CD8-positive, alpha-beta T cell (primary cell): ENCODE measurements at regions of chr14 and their contacts with region 1.

Region 1: GRCh38 chr14:69398053-69398817 is at the starts of genes ERH and SLC39A9:
- DNase-seq: peak; percentile 87 to 98 (median 94)
- ATAC-seq: peak; percentile 79
- H3K4me3 ChIP-seq: peak within 1 kb of the TSS; percentile 69 to 78
- H3K4me3 Mint-ChIP-seq: peak within 1 kb of the TSS; percentile 99
- H3K27ac ChIP-seq: peak within 1 kb of the TSS; percentile 86 to 92
- H3K27ac Mint-ChIP-seq: peak within 1 kb of the TSS; percentile 100
- H3K4me1 ChIP-seq: peaks cover 58% of the 10 kb centered on the region
- H3K4me1 Mint-ChIP-seq: peaks cover 78% of the 10 kb centered on the region
- H3K27me3 ChIP-seq: no peaks in the 10 kb centered on the region
- H3K27me3 Mint-ChIP-seq: no peaks in the 10 kb centered on the region
- CTCF ChIP-seq: no peak
- total RNA-seq, gene ERH: 95.6 to 97.2 TPM
- total RNA-seq, gene SLC39A9: 15.8 to 18.5 TPM

Region 2: GRCh38 chr14:67674481-67675169 is 1723.6 kb before region 1 on chr14 and contains the start of gene VTI1B:
- CTCF ChIA-PET with region 1: no interaction called
- POLR2A ChIA-PET with region 1: no interaction called
- intact Hi-C with region 1: loop called in 1 of 2 experiments (anchors 10 kb)
- DNase-seq: peak; percentile 64 to 89 (median 79)
- ATAC-seq: peak; percentile 92
- H3K4me3 ChIP-seq: peak within 1 kb of the TSS; percentile 78 to 82
- H3K4me3 Mint-ChIP-seq: peak within 1 kb of the TSS; percentile 94
- H3K27ac ChIP-seq: peak within 1 kb of the TSS; percentile 93 to 95
- H3K27ac Mint-ChIP-seq: peak within 1 kb of the TSS; percentile 93
- H3K4me1 ChIP-seq: peaks cover 32% of the 10 kb centered on the region
- H3K4me1 Mint-ChIP-seq: peaks cover 39% of the 10 kb centered on the region
- H3K27me3 ChIP-seq: no peaks in the 10 kb centered on the region
- H3K27me3 Mint-ChIP-seq: no peaks in the 10 kb centered on the region
- CTCF ChIP-seq: no peak
- total RNA-seq, gene VTI1B: 27.6 to 31.1 TPM

Region 3: DNA sequence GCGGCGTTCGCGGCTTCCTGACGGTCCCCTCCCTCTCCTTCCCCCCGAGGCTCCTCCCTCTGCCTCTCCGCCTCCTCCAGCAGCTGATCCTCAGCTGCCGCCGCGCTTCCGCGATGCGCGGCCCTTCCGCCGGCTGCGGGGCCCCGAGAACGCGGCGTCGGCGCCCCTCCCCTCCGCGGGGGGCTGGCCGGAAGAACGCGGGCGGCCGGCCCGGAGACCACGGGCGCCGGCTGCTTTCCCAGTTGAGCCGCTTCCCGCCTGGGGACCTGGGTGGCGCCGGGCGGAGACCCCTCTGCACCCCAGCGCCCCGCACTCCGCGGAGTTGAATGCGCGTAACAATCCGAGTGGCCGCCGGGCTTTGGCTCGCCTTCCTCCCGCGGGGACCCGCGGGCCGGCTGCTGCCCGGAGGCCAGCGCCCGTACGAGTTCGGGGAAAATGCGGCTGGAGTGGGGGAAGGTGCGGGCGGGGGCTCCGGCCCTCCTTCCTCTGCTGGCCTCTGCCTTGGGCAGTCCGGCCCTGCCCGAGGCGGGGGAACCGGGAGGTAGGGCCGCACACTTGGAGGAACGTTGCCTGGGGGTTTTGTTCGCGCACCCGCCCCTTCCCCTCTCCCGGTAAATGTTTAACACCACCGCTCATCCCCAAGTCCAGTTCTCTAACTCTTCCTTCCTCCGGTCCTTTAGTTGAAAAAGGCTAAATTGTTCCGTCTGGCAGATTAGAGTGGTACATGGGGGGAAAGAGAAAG is 244.9 kb before region 1 on chr14:
- CTCF ChIA-PET with region 1: no interaction called
- POLR2A ChIA-PET with region 1: interaction called, 4 read pairs
- intact Hi-C with region 1: loop called (anchors 1 to 2 kb)
- DNase-seq: peak; percentile 87 to 98 (median 93)
- ATAC-seq: peak; percentile 91
- H3K4me3 ChIP-seq: peak overlapping the region; percentile 93 to 95
- H3K4me3 Mint-ChIP-seq: peak overlapping the region; percentile 89
- H3K27ac ChIP-seq: peak overlapping the region; percentile 51 to 69
- H3K27ac Mint-ChIP-seq: peak overlapping the region; percentile 95
- H3K4me1 ChIP-seq: peaks cover 36% of the 10 kb centered on the region
- H3K4me1 Mint-ChIP-seq: peaks cover 33% of the 10 kb centered on the region
- H3K27me3 ChIP-seq: no peaks in the 10 kb centered on the region
- H3K27me3 Mint-ChIP-seq: no peaks in the 10 kb centered on the region
- CTCF ChIP-seq: no peak

Region 4: GRCh38 chr14:69611201-69612011 is 213.2 kb after region 1 on chr14 and contains the start of gene SUSD6:
- CTCF ChIA-PET with region 1: no interaction called
- POLR2A ChIA-PET with region 1: interaction called, 4 read pairs
- intact Hi-C with region 1: loop called in 1 of 2 experiments (anchors 5 kb)
- DNase-seq: peak; percentile 79 to 94 (median 87)
- ATAC-seq: peak; percentile 84
- H3K4me3 ChIP-seq: peak within 1 kb of the TSS; percentile 57 to 67
- H3K4me3 Mint-ChIP-seq: peak within 1 kb of the TSS; percentile 89
- H3K27ac ChIP-seq: peak within 1 kb of the TSS; percentile 62 to 90
- H3K27ac Mint-ChIP-seq: peak within 1 kb of the TSS; percentile 100
- H3K4me1 ChIP-seq: peaks cover 54% of the 10 kb centered on the region
- H3K4me1 Mint-ChIP-seq: peaks cover 54% of the 10 kb centered on the region
- H3K27me3 ChIP-seq: no peaks in the 10 kb centered on the region
- H3K27me3 Mint-ChIP-seq: no peaks in the 10 kb centered on the region
- CTCF ChIP-seq: no peak
- total RNA-seq, gene SUSD6: 86.4 to 92.2 TPM

Region 5: DNA sequence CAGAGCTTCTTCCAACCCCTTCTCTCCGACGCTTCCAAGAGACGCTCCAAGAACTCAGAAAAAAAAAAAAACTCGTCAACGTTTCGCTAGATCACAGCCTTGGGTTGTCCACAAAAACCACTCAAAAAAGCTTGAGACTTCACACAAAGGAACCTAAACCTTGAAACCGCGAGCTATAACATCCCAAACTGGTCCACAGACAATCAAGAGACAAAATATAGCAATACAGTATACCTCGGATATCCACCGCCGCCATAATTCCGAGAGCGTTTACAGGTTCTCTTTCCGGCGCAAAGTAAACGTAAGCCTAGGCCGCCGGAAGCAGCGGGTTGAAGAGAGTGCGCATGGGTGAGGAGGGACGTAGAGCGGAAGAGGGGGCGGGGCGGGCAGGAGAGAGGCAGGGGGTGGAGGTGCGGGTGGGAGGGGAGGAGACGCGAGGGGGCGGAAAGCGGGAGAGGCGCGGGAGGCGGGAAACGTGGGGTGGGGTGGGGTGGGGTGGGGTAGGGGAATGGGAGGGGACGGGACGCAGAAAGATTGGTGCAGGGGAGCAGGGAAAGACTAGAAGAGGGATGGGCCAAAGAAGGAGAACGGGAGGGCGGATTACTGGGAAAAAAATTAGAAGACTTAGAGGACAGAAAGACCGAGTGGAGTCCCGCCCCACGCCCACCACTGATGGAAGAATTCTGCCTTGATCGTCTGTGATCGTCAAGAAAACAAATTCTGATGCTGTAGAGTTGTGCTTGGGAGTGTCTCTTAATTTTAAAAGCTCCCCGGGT is 1202.3 kb after region 1 on chr14 and contains the start of gene MED6:
- CTCF ChIA-PET with region 1: no interaction called
- POLR2A ChIA-PET with region 1: no interaction called
- intact Hi-C with region 1: loop called in 1 of 2 experiments (anchors 2 kb)
- DNase-seq: peak; percentile 83 to 96 (median 94)
- ATAC-seq: peak; percentile 100
- H3K4me3 ChIP-seq: peak within 1 kb of the TSS; percentile 90 to 99
- H3K4me3 Mint-ChIP-seq: peak within 1 kb of the TSS; percentile 99
- H3K27ac ChIP-seq: peak within 1 kb of the TSS; percentile 92 to 96
- H3K27ac Mint-ChIP-seq: peak within 1 kb of the TSS; percentile 99
- H3K4me1 ChIP-seq: peaks cover 20% of the 10 kb centered on the region
- H3K4me1 Mint-ChIP-seq: peaks cover 30% of the 10 kb centered on the region
- H3K27me3 ChIP-seq: no peaks in the 10 kb centered on the region
- H3K27me3 Mint-ChIP-seq: no peaks in the 10 kb centered on the region
- CTCF ChIP-seq: no peak
- total RNA-seq, gene MED6: 116 to 119 TPM